PC-9 (cell line): ENCODE measurements at regions of chr5 and their contacts with region 1.

Region 1: DNA sequence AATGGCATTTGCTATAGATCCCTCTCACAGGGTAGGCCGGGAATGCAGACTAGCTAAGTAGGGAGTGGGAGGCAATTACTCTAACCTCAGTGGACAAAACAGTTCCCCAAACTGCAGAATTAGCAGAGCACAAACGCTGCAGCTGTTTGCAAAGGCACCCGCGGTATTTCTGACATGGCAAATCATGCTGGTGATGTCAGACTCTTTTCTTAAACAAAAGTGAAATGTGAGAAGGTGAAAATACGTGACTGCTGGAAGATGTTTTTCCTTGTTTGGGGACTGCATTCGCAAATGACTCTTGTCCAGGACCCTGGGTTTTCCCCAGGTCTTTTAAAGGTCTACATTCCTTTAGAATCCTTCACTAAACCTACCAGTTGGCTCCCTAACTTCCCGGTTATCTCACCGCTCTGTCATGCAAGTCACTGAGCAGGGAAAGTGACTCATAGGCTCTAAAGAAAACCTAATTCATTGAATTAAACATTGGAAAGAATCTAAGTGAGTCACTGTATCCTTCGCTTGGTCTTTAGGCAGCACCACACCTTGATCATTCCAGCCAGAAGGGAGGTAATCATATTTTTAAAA is 91.5 kb upstream of the DNAH5 start:
- DNase-seq: peak; percentile 94 to 100
- H3K4me3 ChIP-seq: peak overlapping the region; percentile 18; the same call in 1 of the 2 replicates
- H3K27ac ChIP-seq: peak overlapping the region; percentile 98
- H3K4me1 ChIP-seq: peaks cover 83% of the 10 kb centered on the region
- H3K27me3 ChIP-seq: no peaks in the 10 kb centered on the region
- CTCF ChIP-seq: no peak

Region 2: GRCh38 chr5:13946115-13946514 is 89.8 kb before region 1 on chr5:
- CTCF ChIA-PET with region 1: no interaction called
- POLR2A ChIA-PET with region 1: no interaction called
- intact Hi-C with region 1: no loop called
- DNase-seq: no peak
- H3K4me3 ChIP-seq: no peak overlapping the region
- H3K27ac ChIP-seq: no peak overlapping the region
- H3K4me1 ChIP-seq: no peaks in the 10 kb centered on the region
- H3K27me3 ChIP-seq: no peaks in the 10 kb centered on the region
- CTCF ChIP-seq: no peak

Region 3: DNA sequence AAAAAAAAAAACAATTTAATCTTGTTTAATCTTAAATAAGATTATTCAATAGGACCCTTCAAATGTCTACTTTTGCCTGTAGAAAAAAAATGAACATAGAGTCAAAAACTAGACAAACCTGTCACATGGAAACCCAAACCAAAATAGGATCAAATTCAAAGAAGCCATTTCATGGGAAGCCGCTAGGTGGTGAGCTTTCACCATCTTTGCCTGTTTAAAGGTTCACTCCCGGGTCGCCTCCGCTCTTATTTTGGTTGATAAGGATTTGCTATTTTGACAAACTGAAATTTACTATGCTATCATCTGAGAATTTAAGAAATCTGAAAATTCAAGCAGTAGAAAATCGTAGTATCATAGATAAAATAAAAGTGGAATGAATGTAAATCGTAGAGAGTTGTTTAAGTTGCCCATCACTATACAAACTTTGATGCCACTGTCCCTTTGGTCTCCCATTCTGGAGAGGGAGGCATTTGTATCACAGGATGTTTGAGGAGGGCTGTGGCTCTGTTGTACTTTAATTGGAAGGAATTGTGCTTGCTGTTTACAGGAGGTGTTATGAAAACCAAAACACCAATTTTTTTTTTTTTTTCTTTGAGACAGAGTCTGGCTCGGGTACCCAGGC is 48.0 kb before region 1 on chr5:
- CTCF ChIA-PET with region 1: interaction called, 5 read pairs
- POLR2A ChIA-PET with region 1: interaction called, 6 read pairs
- intact Hi-C with region 1: loop called (anchors 1 kb)
- DNase-seq: peak; percentile 69 to 87
- H3K4me3 ChIP-seq: no peak overlapping the region
- H3K27ac ChIP-seq: peak overlapping the region; percentile 25; the same call in 1 of the 2 replicates
- H3K4me1 ChIP-seq: peaks cover 30% of the 10 kb centered on the region
- H3K27me3 ChIP-seq: no peaks in the 10 kb centered on the region
- CTCF ChIP-seq: peak; percentile 97

Region 4: GRCh38 chr5:14025569-14026286 is 10.2 kb before region 1 on chr5:
- CTCF ChIA-PET with region 1: interaction called, 3 read pairs
- POLR2A ChIA-PET with region 1: interaction called, 6 read pairs
- intact Hi-C with region 1: loop called (anchors 1 kb)
- DNase-seq: peak; percentile 77 to 87
- H3K4me3 ChIP-seq: no peak overlapping the region
- H3K27ac ChIP-seq: peak overlapping the region; percentile 73
- H3K4me1 ChIP-seq: peaks cover 20% of the 10 kb centered on the region
- H3K27me3 ChIP-seq: no peaks in the 10 kb centered on the region
- CTCF ChIP-seq: no peak

Region 5: GRCh38 chr5:14156650-14157493 is 120.9 kb after region 1 on chr5:
- CTCF ChIA-PET with region 1: interaction called, 5 read pairs
- POLR2A ChIA-PET with region 1: interaction called, 12 read pairs
- intact Hi-C with region 1: loop called (anchors 1 kb)
- DNase-seq: peak; percentile 83 to 99
- H3K4me3 ChIP-seq: peak overlapping the region; percentile 45; the same call in 1 of the 2 replicates
- H3K27ac ChIP-seq: peak overlapping the region; percentile 87
- H3K4me1 ChIP-seq: peaks cover 76% of the 10 kb centered on the region
- H3K27me3 ChIP-seq: no peaks in the 10 kb centered on the region
- CTCF ChIP-seq: no peak; the same call in 1 of the 2 replicates

Region 6: DNA sequence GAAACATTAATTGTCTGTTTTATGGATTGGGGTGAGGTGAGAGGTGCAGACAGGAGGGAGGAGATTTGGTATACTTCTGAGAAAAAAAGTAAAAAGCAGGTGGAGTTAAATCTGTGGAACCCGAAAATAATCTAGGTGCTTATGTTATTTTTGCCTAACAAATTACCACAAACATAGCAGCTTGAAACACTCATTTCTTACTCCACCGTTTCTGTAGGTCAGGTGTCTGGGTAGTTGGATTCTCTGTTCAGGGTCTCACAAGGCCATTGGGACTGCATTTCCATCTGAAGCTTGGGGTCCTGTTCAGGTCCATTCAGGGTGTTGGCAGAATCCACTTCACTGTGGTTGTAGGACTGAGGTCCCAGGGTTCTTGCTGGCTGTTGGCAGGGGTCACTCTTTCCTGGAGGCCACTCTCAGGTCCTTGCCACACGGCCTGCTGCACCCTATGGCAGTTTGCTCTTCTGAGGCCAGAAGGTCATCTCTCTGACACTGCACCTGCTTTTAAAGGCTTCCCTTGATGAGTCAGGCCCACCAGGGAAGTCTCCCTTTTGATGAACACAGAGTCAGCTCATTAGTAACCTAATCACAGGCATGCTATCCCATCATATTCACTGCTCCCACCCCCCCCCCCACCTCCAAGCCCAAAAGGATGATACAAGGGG is 189.4 kb after region 1 on chr5:
- CTCF ChIA-PET with region 1: no interaction called
- POLR2A ChIA-PET with region 1: interaction called, 3 read pairs
- intact Hi-C with region 1: loop called (anchors 1 kb)
- DNase-seq: peak in 1 of 2 experiments; percentile 43
- H3K4me3 ChIP-seq: no peak overlapping the region
- H3K27ac ChIP-seq: peak overlapping the region; percentile 33; the same call in 1 of the 2 replicates
- H3K4me1 ChIP-seq: peaks cover 24% of the 10 kb centered on the region
- H3K27me3 ChIP-seq: no peaks in the 10 kb centered on the region
- CTCF ChIP-seq: no peak

Region 7: DNA sequence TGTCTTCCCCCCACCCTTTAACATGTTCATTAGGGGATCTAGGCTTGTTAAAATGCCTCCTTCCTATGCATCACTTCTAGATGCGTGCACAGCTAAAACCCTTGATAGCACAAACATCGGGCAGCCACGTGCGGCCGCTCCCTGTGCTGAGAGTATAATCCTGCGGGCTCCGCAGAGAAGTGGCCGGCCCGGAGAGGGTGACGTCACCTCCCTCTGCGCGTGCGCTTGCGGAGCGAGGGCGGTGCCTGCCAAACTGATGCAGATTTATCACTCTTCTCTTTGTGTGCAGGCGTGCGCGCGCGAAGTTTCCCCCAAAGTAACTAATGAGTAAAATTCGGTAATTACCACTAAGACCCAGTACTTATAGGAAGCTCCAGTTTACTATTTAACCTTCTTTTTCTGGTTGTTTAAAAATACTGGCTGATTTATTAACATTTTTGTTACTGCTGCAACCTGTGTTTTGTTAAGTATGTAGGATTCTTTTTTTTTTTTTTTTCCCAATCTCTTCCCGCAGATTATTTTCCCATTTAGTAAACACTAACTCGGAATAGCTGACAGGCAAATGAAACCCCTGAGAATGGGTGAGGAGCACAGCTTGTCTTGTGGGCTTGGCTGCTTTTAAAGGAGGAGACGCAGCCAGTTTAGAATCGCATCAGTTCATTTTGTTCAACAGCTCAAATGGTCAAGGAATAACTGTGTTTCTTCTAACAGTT is 228.8 kb after region 1 on chr5:
- CTCF ChIA-PET with region 1: interaction called, 13 read pairs
- POLR2A ChIA-PET with region 1: interaction called, 17 read pairs
- intact Hi-C with region 1: loop called (anchors 1 kb)
- DNase-seq: peak; percentile 90 to 99
- H3K4me3 ChIP-seq: peak overlapping the region; percentile 52
- H3K27ac ChIP-seq: peak overlapping the region; percentile 88
- H3K4me1 ChIP-seq: peaks cover 62% of the 10 kb centered on the region
- H3K27me3 ChIP-seq: no peaks in the 10 kb centered on the region
- CTCF ChIP-seq: no peak

Region 8: GRCh38 chr5:14357851-14358250 is 321.9 kb after region 1 on chr5:
- CTCF ChIA-PET with region 1: no interaction called
- POLR2A ChIA-PET with region 1: no interaction called
- intact Hi-C with region 1: no loop called
- DNase-seq: no peak
- H3K4me3 ChIP-seq: no peak overlapping the region
- H3K27ac ChIP-seq: no peak overlapping the region
- H3K4me1 ChIP-seq: no peaks in the 10 kb centered on the region
- H3K27me3 ChIP-seq: no peaks in the 10 kb centered on the region
- CTCF ChIP-seq: no peak

Region 9: GRCh38 chr5:14405267-14405666 is 369.3 kb after region 1 on chr5:
- CTCF ChIA-PET with region 1: no interaction called
- POLR2A ChIA-PET with region 1: no interaction called
- intact Hi-C with region 1: loop called (anchors 2 kb)
- DNase-seq: peak in 1 of 2 experiments; percentile 73
- H3K4me3 ChIP-seq: no peak overlapping the region
- H3K27ac ChIP-seq: no peak overlapping the region
- H3K4me1 ChIP-seq: no peaks in the 10 kb centered on the region
- H3K27me3 ChIP-seq: no peaks in the 10 kb centered on the region
- CTCF ChIP-seq: 0 out of 2 replicates have a peak, but pooled peaks have one; percentile 34